PC-3 (cell line): ENCODE measurements at regions of chr7 and their contacts with region 1.

Region 1: GRCh38 chr7:84194543-84195271 is at the start of gene SEMA3A:
- DNase-seq: peak; percentile 77
- ATAC-seq: peak; percentile 77
- H3K4me3 ChIP-seq: peak within 1 kb of the TSS; percentile 79
- H3K27ac ChIP-seq: peak within 1 kb of the TSS; percentile 94
- H3K4me1 ChIP-seq: peaks cover 36% of the 10 kb centered on the region
- H3K27me3 ChIP-seq: no peaks in the 10 kb centered on the region
- CTCF ChIP-seq: no peak
- total RNA-seq, gene SEMA3A: 13.7 and 16.9 TPM in 2 replicates

Region 2: GRCh38 chr7:84025332-84025927 is 169.3 kb before region 1 on chr7:
- CTCF ChIA-PET with region 1: no interaction called
- POLR2A ChIA-PET with region 1: interaction called, 13 read pairs
- intact Hi-C with region 1: loop called (anchors 1 kb)
- DNase-seq: peak; percentile 88
- ATAC-seq: peak; percentile 55
- H3K4me3 ChIP-seq: no peak overlapping the region
- H3K27ac ChIP-seq: peak overlapping the region; percentile 91
- H3K4me1 ChIP-seq: peaks cover 50% of the 10 kb centered on the region
- H3K27me3 ChIP-seq: no peaks in the 10 kb centered on the region
- CTCF ChIP-seq: no peak

Region 3: GRCh38 chr7:84412161-84412969 is 217.7 kb after region 1 on chr7:
- CTCF ChIA-PET with region 1: no interaction called
- POLR2A ChIA-PET with region 1: interaction called, 3 read pairs
- intact Hi-C with region 1: loop called (anchors 1 kb)
- DNase-seq: peak; percentile 96
- ATAC-seq: peak; percentile 91
- H3K4me3 ChIP-seq: peak overlapping the region; percentile 43; the same call in 1 of the 2 replicates
- H3K27ac ChIP-seq: peak overlapping the region; percentile 98
- H3K4me1 ChIP-seq: peaks cover 31% of the 10 kb centered on the region
- H3K27me3 ChIP-seq: no peaks in the 10 kb centered on the region
- CTCF ChIP-seq: no peak

Region 4: GRCh38 chr7:84484502-84485079 is 289.9 kb after region 1 on chr7:
- CTCF ChIA-PET with region 1: no interaction called
- POLR2A ChIA-PET with region 1: no interaction called
- intact Hi-C with region 1: loop called (anchors 2 kb)
- DNase-seq: peak; percentile 88
- ATAC-seq: peak; percentile 97
- H3K4me3 ChIP-seq: no peak overlapping the region
- H3K27ac ChIP-seq: peak overlapping the region; percentile 37
- H3K4me1 ChIP-seq: peaks cover 7% of the 10 kb centered on the region; the same call in 1 of the 2 replicates
- H3K27me3 ChIP-seq: no peaks in the 10 kb centered on the region
- CTCF ChIP-seq: no peak

Region 5: DNA sequence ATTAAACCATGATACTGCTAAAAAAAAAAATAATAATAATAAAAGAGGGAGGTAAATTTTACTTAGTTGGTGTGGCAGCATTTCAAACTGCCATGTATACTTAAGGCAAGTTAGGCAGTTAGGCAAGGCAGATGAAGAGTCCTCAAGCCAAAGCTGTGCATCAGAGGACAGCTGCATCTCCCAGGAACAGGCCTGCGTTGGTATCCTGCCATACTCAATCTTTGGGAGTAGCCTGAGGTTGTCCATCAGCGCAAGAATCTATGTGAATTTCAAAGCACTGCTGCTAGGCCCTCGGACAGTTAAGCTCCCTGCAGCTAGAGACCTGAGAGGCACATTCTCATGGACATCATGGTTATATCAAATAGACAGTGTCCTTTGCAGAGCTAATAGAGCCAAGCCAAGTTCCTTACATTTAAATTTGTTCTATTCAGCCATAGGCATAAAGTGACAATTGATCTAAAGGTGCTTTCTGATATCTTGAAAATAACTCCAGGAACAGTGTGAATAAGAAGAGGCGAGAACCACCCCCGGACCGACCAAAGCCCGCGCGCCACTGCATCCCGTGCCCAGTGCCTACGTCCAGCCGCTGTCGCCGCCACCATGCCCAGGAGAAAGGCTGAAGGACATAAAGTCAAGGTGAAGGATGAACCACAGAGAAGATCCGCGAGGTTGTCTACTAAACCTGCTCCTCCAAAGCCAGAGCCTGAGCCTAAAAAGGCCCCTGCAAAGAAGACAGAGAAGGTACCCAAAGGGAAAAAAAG is 681.5 kb after region 1 on chr7:
- CTCF ChIA-PET with region 1: no interaction called
- POLR2A ChIA-PET with region 1: no interaction called
- intact Hi-C with region 1: no loop called
- DNase-seq: no peak
- ATAC-seq: no peak
- H3K4me3 ChIP-seq: no peak overlapping the region
- H3K27ac ChIP-seq: no peak overlapping the region
- H3K4me1 ChIP-seq: no peaks in the 10 kb centered on the region
- H3K27me3 ChIP-seq: no peaks in the 10 kb centered on the region
- CTCF ChIP-seq: no peak